Naive thymus-derived CD4-positive, alpha-beta T cell (primary cell): ENCODE measurements at regions of chr3 and their contacts with region 1.

Region 1: DNA sequence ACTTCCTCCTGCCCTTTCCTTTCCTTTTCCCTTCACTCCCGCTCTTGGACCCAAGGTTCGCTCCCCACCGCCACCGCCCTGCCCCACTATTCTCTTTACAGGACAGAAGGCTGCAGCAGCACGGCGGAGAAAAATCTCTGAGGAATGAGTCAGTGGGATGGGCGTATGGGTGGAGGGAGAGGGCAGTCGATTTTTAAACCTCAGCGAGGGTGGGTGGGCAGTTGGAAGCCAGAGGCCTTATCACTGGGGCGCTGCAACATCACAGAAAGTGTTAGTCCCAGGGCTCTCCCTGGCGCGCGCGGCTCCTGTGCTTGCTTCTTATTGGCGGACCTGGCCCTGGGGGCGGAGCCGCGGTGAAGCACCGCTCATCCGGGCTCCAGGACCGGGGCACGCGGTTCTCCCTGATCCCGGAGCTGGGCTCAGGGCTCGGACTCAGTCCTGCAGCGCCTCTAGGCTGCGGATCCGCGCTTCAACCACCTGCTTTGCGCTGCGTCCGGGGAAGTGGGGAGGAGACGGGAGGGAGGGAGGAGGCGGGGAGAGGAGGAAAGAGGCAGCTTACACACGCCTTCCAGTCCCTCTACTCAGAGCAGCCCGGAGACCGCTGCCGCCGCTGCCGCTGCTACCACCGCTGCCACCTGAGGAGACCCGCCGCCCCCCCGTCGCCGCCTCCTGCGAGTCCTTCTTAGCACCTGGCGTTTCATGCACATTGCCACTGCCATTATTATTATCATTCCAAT is at the start of gene ALCAM:
- DNase-seq: peak; percentile 66 to 85 (median 73)
- ATAC-seq: peak; percentile 72
- H3K4me3 ChIP-seq: peak within 1 kb of the TSS; percentile 81
- H3K4me3 Mint-ChIP-seq: peak within 1 kb of the TSS; percentile 90 to 97 (median 92)
- H3K27ac ChIP-seq: peak within 1 kb of the TSS; percentile 70
- H3K27ac Mint-ChIP-seq: peak within 1 kb of the TSS; percentile 82 to 99 (median 94)
- H3K4me1 ChIP-seq: peaks cover 3 to 10% of the 10 kb centered on the region in 2 donors
- H3K4me1 Mint-ChIP-seq: peaks cover 22 to 40% (median 29%) of the 10 kb centered on the region in 7 donors
- H3K27me3 ChIP-seq: no peaks in the 10 kb centered on the region
- H3K27me3 Mint-ChIP-seq: peaks cover 14 to 32% (median 24%) of the 10 kb centered on the region in 5 donors
- total RNA-seq, gene ALCAM: 3.4 to 10.3 (median 4.4) TPM

Region 2: GRCh38 chr3:104564045-104564643 is 802.4 kb before region 1 on chr3:
- CTCF ChIA-PET with region 1: interaction called, 3 read pairs
- POLR2A ChIA-PET with region 1: no interaction called
- intact Hi-C with region 1: loop called (anchors 1 kb)
- DNase-seq: peak in 8 of 9 donors; percentile 9 to 52 (median 45)
- ATAC-seq: peak; percentile 67
- H3K4me3 ChIP-seq: no peak overlapping the region
- H3K4me3 Mint-ChIP-seq: no peak overlapping the region
- H3K27ac ChIP-seq: no peak overlapping the region
- H3K27ac Mint-ChIP-seq: no peak overlapping the region
- H3K4me1 ChIP-seq: no peaks in the 10 kb centered on the region
- H3K4me1 Mint-ChIP-seq: no peaks in the 10 kb centered on the region
- H3K27me3 ChIP-seq: no peaks in the 10 kb centered on the region
- H3K27me3 Mint-ChIP-seq: peaks cover 0 to 8% (median 5%) of the 10 kb centered on the region in 5 donors

Region 3: GRCh38 chr3:104939196-104939595 is 427.3 kb before region 1 on chr3:
- CTCF ChIA-PET with region 1: no interaction called
- POLR2A ChIA-PET with region 1: no interaction called
- intact Hi-C with region 1: no loop called
- DNase-seq: no peak
- ATAC-seq: no peak
- H3K4me3 ChIP-seq: no peak overlapping the region
- H3K4me3 Mint-ChIP-seq: no peak overlapping the region
- H3K27ac ChIP-seq: no peak overlapping the region
- H3K27ac Mint-ChIP-seq: no peak overlapping the region
- H3K4me1 ChIP-seq: no peaks in the 10 kb centered on the region
- H3K4me1 Mint-ChIP-seq: no peaks in the 10 kb centered on the region
- H3K27me3 ChIP-seq: no peaks in the 10 kb centered on the region
- H3K27me3 Mint-ChIP-seq: peaks cover 0 to 6% (median 0%) of the 10 kb centered on the region in 5 donors

Region 4: DNA sequence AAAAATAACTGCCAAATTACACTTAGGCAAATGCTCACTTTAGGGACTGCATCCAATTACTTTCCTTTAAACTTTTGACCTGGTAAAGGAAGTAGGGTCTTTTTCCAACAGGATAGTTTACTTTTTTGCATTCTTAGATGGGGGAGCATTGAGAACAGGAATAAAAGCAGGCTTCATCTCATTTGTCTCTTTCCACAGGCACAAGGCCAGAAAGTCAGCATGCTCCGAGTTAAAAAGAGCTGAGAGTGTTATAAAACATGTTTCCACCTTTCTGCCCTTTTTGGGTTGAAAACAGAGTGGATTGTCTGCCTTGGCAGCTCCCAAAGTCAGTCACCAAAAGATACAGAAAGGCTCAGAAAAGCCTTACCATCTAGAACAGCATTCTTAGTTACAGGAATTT is 404.6 kb before region 1 on chr3:
- CTCF ChIA-PET with region 1: no interaction called
- POLR2A ChIA-PET with region 1: no interaction called
- intact Hi-C with region 1: no loop called
- DNase-seq: no peak
- ATAC-seq: no peak
- H3K4me3 ChIP-seq: no peak overlapping the region
- H3K4me3 Mint-ChIP-seq: no peak overlapping the region
- H3K27ac ChIP-seq: no peak overlapping the region
- H3K27ac Mint-ChIP-seq: no peak overlapping the region
- H3K4me1 ChIP-seq: no peaks in the 10 kb centered on the region
- H3K4me1 Mint-ChIP-seq: no peaks in the 10 kb centered on the region
- H3K27me3 ChIP-seq: no peaks in the 10 kb centered on the region
- H3K27me3 Mint-ChIP-seq: no peaks in the 10 kb centered on the region

Region 5: DNA sequence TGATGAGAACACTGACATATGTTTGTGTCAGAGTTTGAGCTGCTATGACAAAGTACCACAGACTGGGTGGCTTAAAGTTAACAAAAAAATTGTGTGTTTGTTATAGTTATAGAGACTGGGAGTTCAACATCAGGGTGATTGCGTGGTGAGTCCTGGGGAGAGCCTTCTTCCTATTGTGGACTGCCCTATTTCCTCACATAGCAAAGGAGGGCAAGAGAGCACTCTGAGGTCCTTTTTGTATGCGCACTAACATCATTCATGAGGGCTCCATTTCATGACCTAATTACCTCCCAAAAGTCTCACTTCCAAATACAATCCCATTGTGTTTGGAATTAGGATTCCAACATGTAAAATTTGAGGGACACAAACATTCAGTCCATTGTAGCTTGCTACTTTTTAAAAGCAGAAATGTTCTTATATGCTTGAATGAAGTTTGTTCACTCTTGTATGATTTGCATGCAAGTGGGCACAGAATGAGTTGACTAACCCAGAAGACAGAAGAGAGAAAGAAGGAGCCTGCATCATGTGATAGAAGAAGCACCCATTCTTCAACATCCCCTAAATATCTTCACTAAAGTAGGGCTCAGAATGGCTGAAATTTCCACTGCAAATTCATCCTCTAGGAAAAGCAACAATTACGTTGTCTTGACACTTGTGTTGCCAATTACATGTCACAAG is 18.7 kb before region 1 on chr3:
- CTCF ChIA-PET with region 1: no interaction called
- POLR2A ChIA-PET with region 1: no interaction called
- intact Hi-C with region 1: no loop called
- DNase-seq: no peak
- ATAC-seq: no peak
- H3K4me3 ChIP-seq: no peak overlapping the region
- H3K4me3 Mint-ChIP-seq: no peak overlapping the region
- H3K27ac ChIP-seq: no peak overlapping the region
- H3K27ac Mint-ChIP-seq: no peak overlapping the region
- H3K4me1 ChIP-seq: no peaks in the 10 kb centered on the region
- H3K4me1 Mint-ChIP-seq: no peaks in the 10 kb centered on the region
- H3K27me3 ChIP-seq: no peaks in the 10 kb centered on the region
- H3K27me3 Mint-ChIP-seq: peaks cover 24 to 40% (median 36%) of the 10 kb centered on the region in 5 donors

Region 6: DNA sequence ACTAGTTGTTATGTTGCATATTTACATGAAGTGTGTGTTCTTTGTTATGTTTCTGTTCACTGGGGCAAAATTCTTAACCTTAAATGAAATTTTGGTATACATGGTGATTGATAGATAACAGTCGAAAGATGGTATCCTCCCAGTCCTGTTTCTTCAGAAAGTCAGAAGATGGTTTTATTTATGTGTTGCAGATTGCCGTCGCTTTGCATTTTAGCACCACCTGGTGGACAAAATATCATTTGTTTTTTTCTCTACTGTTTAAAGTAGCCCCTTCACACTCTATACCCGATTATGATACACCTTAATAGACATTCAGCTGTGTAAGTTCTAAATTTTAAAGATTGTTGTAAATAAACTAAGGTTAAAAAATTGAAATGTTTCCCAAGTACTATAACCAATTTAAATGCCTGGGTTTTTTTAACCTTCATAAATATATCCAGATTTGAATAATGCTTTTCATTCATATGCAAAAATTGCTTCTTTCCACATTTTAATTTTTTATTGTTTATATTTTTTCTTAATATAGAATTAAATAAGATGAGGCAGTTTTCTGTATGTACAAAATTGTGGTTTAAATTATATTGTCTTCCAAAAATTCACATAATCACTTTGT is 152.4 kb after region 1 on chr3:
- CTCF ChIA-PET with region 1: interaction called, 4 read pairs
- POLR2A ChIA-PET with region 1: no interaction called
- intact Hi-C with region 1: loop called (anchors 2 kb)
- DNase-seq: peak in 7 of 9 donors; percentile 10 to 52 (median 48)
- ATAC-seq: peak; percentile 69
- H3K4me3 ChIP-seq: no peak overlapping the region
- H3K4me3 Mint-ChIP-seq: no peak overlapping the region
- H3K27ac ChIP-seq: no peak overlapping the region
- H3K27ac Mint-ChIP-seq: no peak overlapping the region
- H3K4me1 ChIP-seq: no peaks in the 10 kb centered on the region
- H3K4me1 Mint-ChIP-seq: peaks cover 0 to 5% (median 4%) of the 10 kb centered on the region in 7 donors
- H3K27me3 ChIP-seq: no peaks in the 10 kb centered on the region
- H3K27me3 Mint-ChIP-seq: no peaks in the 10 kb centered on the region

Region 7: GRCh38 chr3:105806361-105806760 is 439.9 kb after region 1 on chr3:
- CTCF ChIA-PET with region 1: no interaction called
- POLR2A ChIA-PET with region 1: no interaction called
- intact Hi-C with region 1: loop called in 1 of 2 experiments (anchors 10 kb)
- DNase-seq: no peak
- ATAC-seq: peak; percentile 78
- H3K4me3 ChIP-seq: no peak overlapping the region
- H3K4me3 Mint-ChIP-seq: peak overlapping the region in 1 of 10 donors; percentile 11
- H3K27ac ChIP-seq: no peak overlapping the region
- H3K27ac Mint-ChIP-seq: peak overlapping the region in 4 of 9 donors; percentile 0 to 85 (median 44)
- H3K4me1 ChIP-seq: peaks cover 11 to 23% of the 10 kb centered on the region in 2 donors
- H3K4me1 Mint-ChIP-seq: peaks cover 39 to 86% (median 65%) of the 10 kb centered on the region in 7 donors
- H3K27me3 ChIP-seq: no peaks in the 10 kb centered on the region
- H3K27me3 Mint-ChIP-seq: no peaks in the 10 kb centered on the region

Region 8: GRCh38 chr3:106130384-106131198 is 764.1 kb after region 1 on chr3:
- CTCF ChIA-PET with region 1: no interaction called
- POLR2A ChIA-PET with region 1: no interaction called
- intact Hi-C with region 1: no loop called
- DNase-seq: no peak
- ATAC-seq: no peak
- H3K4me3 ChIP-seq: no peak overlapping the region
- H3K4me3 Mint-ChIP-seq: peak overlapping the region in 1 of 10 donors; percentile 18
- H3K27ac ChIP-seq: no peak overlapping the region
- H3K27ac Mint-ChIP-seq: peak overlapping the region in 1 of 9 donors; percentile 78
- H3K4me1 ChIP-seq: no peaks in the 10 kb centered on the region
- H3K4me1 Mint-ChIP-seq: peaks cover 0 to 8% (median 0%) of the 10 kb centered on the region in 7 donors
- H3K27me3 ChIP-seq: no peaks in the 10 kb centered on the region
- H3K27me3 Mint-ChIP-seq: no peaks in the 10 kb centered on the region

Region 9: GRCh38 chr3:106333911-106334618 is 967.6 kb after region 1 on chr3:
- CTCF ChIA-PET with region 1: no interaction called
- POLR2A ChIA-PET with region 1: no interaction called
- intact Hi-C with region 1: loop called in 1 of 2 experiments (anchors 5 kb)
- DNase-seq: peak in 1 of 9 donors; percentile 45
- ATAC-seq: peak; percentile 47
- H3K4me3 ChIP-seq: no peak overlapping the region
- H3K4me3 Mint-ChIP-seq: peak overlapping the region in 1 of 10 donors; percentile 73
- H3K27ac ChIP-seq: no peak overlapping the region
- H3K27ac Mint-ChIP-seq: peak overlapping the region in 3 of 9 donors; percentile 47 to 86 (median 62)
- H3K4me1 ChIP-seq: peaks cover 0 to 47% of the 10 kb centered on the region in 2 donors
- H3K4me1 Mint-ChIP-seq: peaks cover 19 to 69% (median 38%) of the 10 kb centered on the region in 7 donors
- H3K27me3 ChIP-seq: no peaks in the 10 kb centered on the region
- H3K27me3 Mint-ChIP-seq: no peaks in the 10 kb centered on the region